KBM-7 (cell line): ENCODE measurements at regions of chr3 and their contacts with region 1.

Region 1: GRCh38 chr3:170811928-170812591 is 57.9 kb downstream of the RPL22L1 start:
- DNase-seq: peak; percentile 92

Region 2: GRCh38 chr3:170414202-170414663 is 397.8 kb before region 1 on chr3:
- in situ Hi-C with region 1: loop called (anchors 25 kb)
- DNase-seq: peak; percentile 66